Activated CD4-positive, alpha-beta memory T cell treated with anti-CD3 and anti-CD28 coated beads, Interleukin-2, amount 10 ng/mL, durations not matched to agents 7 days and 5 days (primary cell): ENCODE measurements at regions of chr11 and their contacts with region 1.

Region 1: DNA sequence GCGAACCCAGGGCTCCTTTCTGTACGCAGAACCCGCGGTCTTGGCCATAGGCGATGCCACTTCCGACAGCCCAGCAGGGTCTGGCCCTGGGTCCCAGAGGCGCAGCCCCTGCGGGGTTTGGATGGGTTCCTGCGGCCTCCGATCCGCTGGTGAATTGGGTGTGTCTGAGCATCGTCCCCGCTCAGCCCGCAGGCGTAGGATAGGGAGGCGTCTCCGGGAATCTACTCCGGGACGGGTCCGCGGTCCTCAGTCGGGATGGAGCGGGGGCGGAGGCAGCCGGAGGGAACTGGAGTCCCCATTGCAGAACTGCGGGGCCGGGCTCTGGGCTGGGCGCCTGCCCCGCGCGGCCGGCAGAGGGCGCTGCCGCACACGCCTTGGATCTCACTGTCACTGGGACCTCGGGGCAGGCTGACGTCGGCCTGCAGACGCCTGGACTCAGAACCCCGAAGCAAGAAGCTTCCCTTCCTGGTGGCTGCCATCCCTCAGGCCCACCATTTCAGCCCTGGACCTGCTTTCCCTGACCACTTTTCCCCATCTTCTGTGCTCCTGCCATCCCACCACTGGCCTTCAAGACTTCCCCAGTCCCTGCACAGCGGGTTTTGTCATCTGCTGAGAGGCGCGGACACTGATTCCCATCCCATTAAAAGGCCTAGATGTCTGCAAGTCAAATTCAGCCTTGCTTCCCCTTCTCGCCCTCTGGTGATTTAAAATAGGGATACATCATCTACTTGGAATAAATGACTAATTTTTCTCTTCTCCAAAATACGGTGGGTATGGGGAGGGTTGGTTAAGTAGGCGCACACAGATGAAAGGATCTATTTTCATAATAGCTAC is 38.3 kb upstream of the CREB3L1 start:
- DNase-seq: peak; percentile 85
- H3K4me3 Mint-ChIP-seq: peak overlapping the region; percentile 69
- H3K27ac Mint-ChIP-seq: peak overlapping the region; percentile 37
- H3K4me1 Mint-ChIP-seq: peaks cover 50% of the 10 kb centered on the region
- H3K27me3 Mint-ChIP-seq: peaks cover 10% of the 10 kb centered on the region

Region 2: GRCh38 chr11:46127150-46127638 is 112.0 kb before region 1 on chr11:
- CTCF ChIA-PET with region 1: interaction called, 14 read pairs
- POLR2A ChIA-PET with region 1: interaction called, 8 read pairs
- DNase-seq: peak; percentile 79
- H3K4me3 Mint-ChIP-seq: no peak overlapping the region
- H3K27ac Mint-ChIP-seq: peak overlapping the region; percentile 72
- H3K4me1 Mint-ChIP-seq: peaks cover 24% of the 10 kb centered on the region
- H3K27me3 Mint-ChIP-seq: peaks cover 4% of the 10 kb centered on the region

Region 3: DNA sequence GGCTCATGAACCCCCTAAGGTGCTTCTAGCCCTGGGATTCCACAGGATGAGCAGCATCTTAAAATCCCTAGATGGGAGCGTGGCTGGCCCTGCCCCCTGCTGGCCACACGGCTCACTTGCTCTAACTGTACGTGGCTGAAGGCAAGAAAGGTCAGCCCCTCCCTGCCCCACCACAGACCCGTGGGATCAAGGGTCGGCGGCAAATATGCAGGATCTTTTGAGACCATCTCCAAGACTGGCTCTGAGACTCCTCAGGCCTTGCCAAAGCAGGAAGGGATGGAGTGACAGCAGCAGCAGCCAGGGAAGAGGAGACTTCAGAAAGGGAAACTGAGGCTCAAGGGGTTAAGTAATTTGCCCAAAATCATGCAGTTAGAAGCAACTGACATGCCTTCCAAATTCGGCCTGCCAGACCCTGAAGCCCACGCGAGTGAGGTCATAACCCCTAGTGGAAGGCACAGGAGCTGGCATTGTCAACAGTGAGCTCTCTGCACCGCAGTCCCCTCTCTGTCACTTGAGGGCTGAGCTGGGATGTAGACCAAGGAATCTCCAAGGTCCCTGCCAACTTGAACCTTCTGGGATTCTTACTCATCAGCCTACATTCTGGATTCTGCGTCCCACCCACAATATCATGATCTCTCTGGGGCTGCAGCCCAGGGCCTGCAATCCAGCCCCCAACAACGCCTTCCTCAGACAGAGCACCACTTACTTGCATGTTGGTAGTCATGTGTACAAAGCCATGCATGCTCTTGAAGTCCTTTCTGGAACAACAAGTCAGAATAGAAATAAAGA is 69.6 kb after region 1 on chr11:
- CTCF ChIA-PET with region 1: interaction called, 263 read pairs
- POLR2A ChIA-PET with region 1: interaction called, 13 read pairs
- DNase-seq: peak; percentile 75
- H3K4me3 Mint-ChIP-seq: no peak overlapping the region
- H3K27ac Mint-ChIP-seq: no peak overlapping the region
- H3K4me1 Mint-ChIP-seq: peaks cover 15% of the 10 kb centered on the region
- H3K27me3 Mint-ChIP-seq: no peaks in the 10 kb centered on the region

Region 4: GRCh38 chr11:46352063-46352841 is 113.1 kb after region 1 on chr11:
- CTCF ChIA-PET with region 1: interaction called, 28 read pairs
- POLR2A ChIA-PET with region 1: interaction called, 12 read pairs
- DNase-seq: peak; percentile 80
- H3K4me3 Mint-ChIP-seq: peak overlapping the region; percentile 74
- H3K27ac Mint-ChIP-seq: peak overlapping the region; percentile 73
- H3K4me1 Mint-ChIP-seq: peaks cover 71% of the 10 kb centered on the region
- H3K27me3 Mint-ChIP-seq: no peaks in the 10 kb centered on the region

Region 5: DNA sequence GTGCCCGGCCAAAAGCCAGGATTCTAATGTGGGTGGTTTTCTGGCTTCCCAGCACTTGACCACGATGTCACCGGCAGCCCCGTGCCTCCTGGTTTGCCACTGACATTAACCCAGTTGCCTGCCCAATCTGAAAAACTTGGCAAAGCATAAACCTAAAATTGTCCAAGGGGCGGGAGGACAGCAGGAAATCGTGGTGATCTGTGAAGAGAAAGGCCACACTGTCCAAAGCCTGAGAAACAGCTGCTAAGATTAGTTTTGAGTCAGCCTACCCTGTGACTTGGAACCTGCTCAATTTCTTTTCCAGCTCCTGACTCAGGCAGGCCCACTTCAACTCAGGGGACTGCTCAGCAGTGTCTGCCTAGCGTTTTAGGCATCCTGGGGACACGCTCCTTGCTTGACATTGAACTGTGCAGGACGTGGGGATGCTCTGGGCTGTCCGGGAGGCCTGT is 471.7 kb after region 1 on chr11:
- CTCF ChIA-PET with region 1: no interaction called
- POLR2A ChIA-PET with region 1: no interaction called
- DNase-seq: no peak
- H3K4me3 Mint-ChIP-seq: no peak overlapping the region
- H3K27ac Mint-ChIP-seq: no peak overlapping the region
- H3K4me1 Mint-ChIP-seq: no peaks in the 10 kb centered on the region
- H3K27me3 Mint-ChIP-seq: no peaks in the 10 kb centered on the region